GM13976 (cell line): ENCODE measurements at regions of chr1 and their contacts with region 1.

Region 1: GRCh38 chr1:45359882-45360513 is 19.8 kb upstream of the MUTYH start:
- DNase-seq: no peak
- CTCF ChIP-seq: peak; percentile 37

Region 2: DNA sequence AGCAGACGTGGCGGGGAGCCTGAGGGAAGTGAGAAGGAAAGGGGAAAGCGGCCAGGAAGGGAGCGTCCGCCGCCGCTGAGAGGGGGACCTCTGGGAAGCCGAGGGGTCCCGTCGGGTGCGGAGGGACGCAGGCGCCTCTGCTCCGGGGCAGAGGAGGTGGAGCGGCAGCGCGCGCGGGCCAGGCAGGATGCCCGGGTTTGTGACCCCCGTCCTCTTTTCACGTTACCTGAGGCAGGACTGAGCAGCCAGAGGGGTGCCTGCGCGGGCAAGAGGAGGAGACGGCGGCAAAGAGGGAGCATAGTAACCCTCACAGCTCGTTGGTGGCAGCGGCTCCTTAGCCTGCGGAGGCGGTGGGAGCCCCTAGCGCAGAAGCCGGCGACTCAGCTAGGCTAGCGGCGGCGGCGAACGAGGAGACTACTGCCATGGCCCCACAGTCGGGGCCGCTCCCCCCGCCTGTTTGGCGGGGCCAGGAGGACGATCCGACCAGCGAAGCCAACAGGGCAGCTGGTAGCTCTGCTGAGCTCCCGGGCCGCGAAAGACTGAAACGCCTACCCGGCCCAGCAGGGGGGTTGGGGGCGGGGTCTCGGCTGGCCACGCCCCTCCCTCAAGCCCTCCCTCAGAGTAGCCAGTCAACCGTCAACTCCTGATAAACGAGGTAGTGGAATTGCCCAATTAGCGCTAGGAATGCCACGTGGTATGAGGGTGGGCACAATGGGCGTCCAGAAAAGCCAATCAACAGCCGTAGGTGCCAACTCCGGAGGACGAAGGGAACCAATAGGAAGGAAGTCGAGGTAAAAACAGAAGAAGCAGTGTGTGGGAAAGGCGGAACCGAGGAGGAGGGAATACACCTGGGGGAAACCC is 130.9 kb after region 1 on chr1 and contains the start of gene TESK2:
- in situ Hi-C with region 1: loop called (anchors 5 kb)
- DNase-seq: peak; percentile 95
- CTCF ChIP-seq: no peak

Region 3: DNA sequence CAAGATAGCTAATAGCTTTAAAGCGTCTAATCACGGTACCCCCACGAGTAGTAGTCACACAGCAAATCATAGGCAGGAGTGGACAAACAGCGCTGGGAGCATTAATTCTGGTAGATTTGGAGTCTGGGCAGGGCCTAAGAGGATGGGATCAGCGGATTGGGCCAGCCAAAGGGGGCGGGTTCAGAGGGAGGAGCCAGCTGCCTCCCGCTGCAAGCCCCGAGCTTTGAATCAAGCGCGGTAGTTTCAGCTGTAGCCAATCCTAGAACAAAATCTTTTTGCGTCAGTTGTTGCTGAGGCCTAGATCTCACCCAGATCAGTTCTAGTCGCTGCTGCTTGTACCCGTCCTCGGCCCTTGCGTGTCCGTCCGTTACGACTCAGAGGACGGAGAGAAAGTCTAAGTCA is 223.3 kb after region 1 on chr1:
- in situ Hi-C with region 1: loop called (anchors 10 kb)
- DNase-seq: peak; percentile 97
- CTCF ChIP-seq: no peak